Natural killer cell (primary cell): ENCODE measurements at regions of chr2 and their contacts with region 1.

Region 1: GRCh38 chr2:101419096-101419663 is 31.9 kb upstream of the CREG2 start:
- DNase-seq: peak in 1 of 2 donors; percentile 84
- ATAC-seq: peak; percentile 59 to 74 (median 69)
- H3K4me3 ChIP-seq: no peak overlapping the region
- H3K4me3 Mint-ChIP-seq: no peak overlapping the region
- H3K27ac ChIP-seq: no peak overlapping the region
- H3K27ac Mint-ChIP-seq: no peak overlapping the region
- H3K4me1 ChIP-seq: no peaks in the 10 kb centered on the region
- H3K4me1 Mint-ChIP-seq: no peaks in the 10 kb centered on the region
- H3K27me3 ChIP-seq: no peaks in the 10 kb centered on the region
- H3K27me3 Mint-ChIP-seq: peaks cover 0 to 6% of the 10 kb centered on the region in 2 donors
- CTCF ChIP-seq: peak; percentile 68

Region 2: GRCh38 chr2:101831351-101831865 is 412.2 kb after region 1 on chr2:
- intact Hi-C with region 1: loop called (anchors 1 kb)
- DNase-seq: peak; percentile 28 to 80
- ATAC-seq: peak; percentile 53 to 72 (median 66)
- H3K4me3 ChIP-seq: no peak overlapping the region
- H3K4me3 Mint-ChIP-seq: no peak overlapping the region
- H3K27ac ChIP-seq: no peak overlapping the region
- H3K27ac Mint-ChIP-seq: peak overlapping the region; percentile 36 to 62
- H3K4me1 ChIP-seq: peaks cover 14% of the 10 kb centered on the region
- H3K4me1 Mint-ChIP-seq: peaks cover 40 to 47% of the 10 kb centered on the region in 2 donors
- H3K27me3 ChIP-seq: no peaks in the 10 kb centered on the region
- H3K27me3 Mint-ChIP-seq: no peaks in the 10 kb centered on the region
- CTCF ChIP-seq: peak; percentile 29